ENCODE measurements at regions of chr12 and their contacts with region 1.

Region 1: DNA sequence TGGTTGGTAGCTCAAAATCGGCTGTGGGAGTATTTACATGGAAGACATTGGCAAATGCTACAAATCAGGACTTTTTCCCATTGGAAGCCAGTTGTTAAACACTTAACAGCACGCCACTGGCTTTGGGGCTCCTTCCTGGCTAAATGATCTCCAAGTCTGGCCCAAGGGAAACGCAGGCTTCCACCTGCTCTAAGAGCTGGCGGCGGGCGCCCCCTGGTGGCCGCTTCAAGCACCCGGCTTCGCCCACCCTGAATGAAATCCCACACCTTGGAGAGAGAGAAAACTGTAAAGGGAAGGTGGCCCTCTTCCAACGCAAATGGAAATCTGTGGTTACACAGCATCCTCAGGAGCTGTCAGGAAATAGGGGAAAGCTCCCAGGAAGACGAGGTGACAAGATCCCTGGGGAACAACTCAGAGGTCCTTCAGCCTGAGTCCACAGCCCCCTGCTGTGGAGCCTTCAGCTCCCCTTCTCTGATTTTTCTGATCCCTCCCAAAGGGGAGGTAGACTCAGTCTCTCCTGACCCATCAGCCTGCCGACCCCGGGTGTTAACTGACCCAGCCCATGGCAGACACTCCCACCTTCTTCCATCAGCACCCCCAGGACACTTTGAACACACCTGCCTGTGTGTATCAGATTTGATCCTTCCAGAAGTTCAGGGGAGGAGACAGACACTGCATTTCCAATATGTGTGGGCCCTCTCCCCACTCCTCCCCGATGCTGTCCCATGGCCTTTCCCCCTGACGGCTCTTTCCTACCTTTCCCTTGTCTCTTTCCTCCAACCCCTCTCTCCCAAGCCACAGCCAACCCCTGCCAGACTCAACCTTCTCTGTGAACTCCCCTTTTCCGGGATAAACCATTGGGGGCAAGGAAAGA is 15.4 kb downstream of the SELPLG start:
- DNase-seq: peak; percentile 86
- ATAC-seq: peak; percentile 55
- H3K4me3 Mint-ChIP-seq: no peak overlapping the region
- H3K27ac Mint-ChIP-seq: peak overlapping the region; percentile 89
- H3K4me1 Mint-ChIP-seq: peaks cover 39% of the 10 kb centered on the region
- H3K27me3 Mint-ChIP-seq: no peaks in the 10 kb centered on the region

Region 2: DNA sequence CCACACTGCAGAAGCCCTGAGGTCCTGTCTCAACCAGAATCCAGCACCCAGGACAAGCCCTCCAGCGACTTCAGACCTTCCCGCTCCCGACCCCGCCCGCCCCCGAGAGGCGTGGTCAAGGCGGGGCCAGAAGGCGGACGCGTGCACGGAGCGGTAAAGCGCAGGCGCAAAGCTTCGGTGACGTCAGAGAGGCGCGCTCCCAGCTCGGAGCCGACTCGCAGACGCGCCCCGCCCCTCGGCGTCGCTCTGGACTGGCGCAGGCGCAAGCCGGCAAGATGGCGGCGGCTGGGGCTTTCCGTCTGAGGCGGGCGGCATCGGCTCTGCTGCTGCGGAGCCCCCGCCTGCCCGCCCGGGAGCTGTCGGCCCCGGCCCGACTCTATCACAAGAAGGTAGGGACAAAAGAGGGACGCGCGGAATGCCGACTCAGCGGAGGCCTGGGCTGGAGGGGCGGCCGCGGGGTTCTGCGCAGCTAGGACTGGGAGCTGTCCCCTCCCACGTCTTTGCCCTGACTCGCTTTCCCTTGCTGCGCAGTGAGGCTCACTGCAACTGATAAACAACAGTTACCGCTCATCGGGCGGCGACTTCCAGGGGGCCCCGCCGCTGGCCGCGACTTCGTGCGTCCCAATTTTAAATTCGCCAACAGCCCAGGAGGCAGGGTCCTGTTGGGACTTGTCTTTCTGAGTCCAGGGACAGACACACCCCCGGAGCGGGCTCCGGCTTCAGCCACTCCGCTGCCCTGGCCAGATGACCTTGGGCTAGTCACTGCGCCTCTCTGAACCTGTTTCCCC is 55.8 kb before region 1 on chr12 and contains the start of gene ISCU:
- POLR2A ChIA-PET with region 1: interaction called, 135 read pairs
- DNase-seq: peak; percentile 100
- ATAC-seq: peak; percentile 79
- H3K4me3 Mint-ChIP-seq: peak within 1 kb of the TSS; percentile 94
- H3K27ac Mint-ChIP-seq: peak within 1 kb of the TSS; percentile 98
- H3K4me1 Mint-ChIP-seq: peaks cover 45% of the 10 kb centered on the region
- H3K27me3 Mint-ChIP-seq: no peaks in the 10 kb centered on the region
- total RNA-seq, gene ISCU: 86.8 to 89.6 TPM

Measured in activated naive CD8-positive, alpha-beta T cell treated with anti-CD3 and anti-CD28 coated beads, Interleukin-2, amount 10 ng/mL, durations not matched to agents 7 days and 5 days (primary cell).